GM10248 (cell line): ENCODE measurements at regions of chr7 and their contacts with region 1.

Region 1: DNA sequence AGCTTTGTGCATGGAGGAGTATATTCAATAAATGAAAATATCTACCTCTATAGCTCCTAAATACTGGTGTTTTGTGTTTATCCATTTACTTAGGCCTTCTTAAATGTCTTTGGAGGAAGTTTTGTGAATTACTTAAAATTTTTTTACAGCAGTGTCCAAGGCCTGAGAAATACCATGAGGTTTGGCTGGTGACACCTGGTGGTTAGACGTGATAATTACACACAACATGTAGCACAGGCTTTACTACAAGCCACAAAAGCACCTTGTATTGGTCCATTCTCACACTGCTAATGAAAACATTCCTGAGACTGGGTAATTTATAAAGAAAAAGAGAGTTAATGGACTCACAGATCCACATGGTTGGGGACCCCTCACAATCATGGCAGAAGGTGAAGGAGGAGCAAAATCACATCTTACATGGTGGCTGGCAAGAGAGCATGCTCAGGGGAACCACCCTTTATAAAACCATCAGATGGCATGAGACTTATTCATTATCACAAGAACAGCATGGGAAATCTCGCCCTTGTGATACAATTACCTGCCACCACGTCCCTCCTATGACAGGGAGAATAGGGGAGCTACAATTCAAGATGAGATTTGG is 20.6 kb downstream of the HYAL4 start:
- DNase-seq: peak; percentile 24
- CTCF ChIP-seq: peak; percentile 51

Region 2: GRCh38 chr7:123682690-123683089 is 182.9 kb before region 1 on chr7:
- CTCF ChIA-PET with region 1: interaction called, 15 read pairs
- POLR2A ChIA-PET with region 1: no interaction called
- DNase-seq: no peak
- CTCF ChIP-seq: peak; percentile 41

Region 3: GRCh38 chr7:123748734-123749536 is 116.7 kb before region 1 on chr7 and contains the start of gene WASL:
- CTCF ChIA-PET with region 1: interaction called, 11 read pairs
- POLR2A ChIA-PET with region 1: no interaction called
- DNase-seq: peak; percentile 90
- CTCF ChIP-seq: no peak

Region 4: GRCh38 chr7:123792547-123792946 is 73.1 kb before region 1 on chr7:
- CTCF ChIA-PET with region 1: interaction called, 109 read pairs
- POLR2A ChIA-PET with region 1: no interaction called
- DNase-seq: no peak
- CTCF ChIP-seq: no peak

Region 5: DNA sequence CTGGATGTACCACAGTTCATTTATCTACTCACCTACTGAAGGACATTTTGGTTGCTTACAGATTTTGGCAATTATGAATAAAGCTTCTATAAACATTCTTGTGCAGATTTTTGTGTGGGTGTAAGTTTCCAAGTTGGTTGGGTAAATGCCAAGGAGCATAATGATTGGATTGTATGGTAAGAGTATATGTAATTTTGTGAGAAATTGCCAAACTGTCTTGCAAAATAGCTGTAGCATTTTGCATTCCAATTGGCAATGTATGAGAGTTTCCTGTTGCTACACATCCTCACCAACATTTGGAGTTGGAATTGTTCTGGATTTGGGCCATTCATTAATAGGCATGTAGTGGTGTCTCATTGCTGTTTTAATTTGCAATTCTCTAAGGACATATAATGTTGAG is 54.6 kb before region 1 on chr7:
- CTCF ChIA-PET with region 1: interaction called, 11 read pairs
- POLR2A ChIA-PET with region 1: no interaction called
- DNase-seq: no peak
- CTCF ChIP-seq: no peak

Region 6: DNA sequence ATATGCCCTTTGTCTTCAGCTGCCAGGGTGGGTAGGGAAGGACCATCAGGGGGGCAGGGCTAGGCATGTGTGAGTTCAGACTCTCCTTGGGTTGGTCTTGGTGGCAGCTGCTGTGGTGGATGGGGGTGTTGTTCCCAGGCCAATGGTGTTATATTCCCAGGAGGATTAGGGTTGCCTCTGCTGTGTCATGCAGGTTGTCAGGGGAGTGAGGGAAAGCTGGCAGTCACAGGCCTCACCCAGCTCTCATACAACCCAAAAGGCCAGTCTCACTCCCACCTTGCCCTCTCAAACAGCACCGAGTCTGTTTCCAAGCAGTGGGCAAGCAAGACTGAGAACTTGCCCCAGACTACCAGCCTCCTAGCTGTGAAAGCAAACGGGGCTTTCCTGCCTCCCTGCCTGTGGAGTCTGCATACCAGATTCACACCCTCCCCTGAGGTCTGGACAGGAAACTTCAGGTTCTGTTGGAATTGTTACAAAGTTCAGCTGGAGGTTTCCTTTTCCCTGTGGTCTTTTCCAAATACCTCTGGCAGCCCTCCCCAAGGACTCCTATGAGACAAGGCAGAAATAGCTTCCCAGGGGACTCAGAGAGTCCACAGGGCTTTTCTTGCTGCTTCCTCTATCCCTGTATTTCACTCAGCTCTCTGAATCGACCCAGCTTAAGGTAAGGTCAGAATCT is 19.3 kb before region 1 on chr7:
- CTCF ChIA-PET with region 1: interaction called, 23 read pairs
- POLR2A ChIA-PET with region 1: no interaction called
- DNase-seq: no peak
- CTCF ChIP-seq: no peak

Region 7: DNA sequence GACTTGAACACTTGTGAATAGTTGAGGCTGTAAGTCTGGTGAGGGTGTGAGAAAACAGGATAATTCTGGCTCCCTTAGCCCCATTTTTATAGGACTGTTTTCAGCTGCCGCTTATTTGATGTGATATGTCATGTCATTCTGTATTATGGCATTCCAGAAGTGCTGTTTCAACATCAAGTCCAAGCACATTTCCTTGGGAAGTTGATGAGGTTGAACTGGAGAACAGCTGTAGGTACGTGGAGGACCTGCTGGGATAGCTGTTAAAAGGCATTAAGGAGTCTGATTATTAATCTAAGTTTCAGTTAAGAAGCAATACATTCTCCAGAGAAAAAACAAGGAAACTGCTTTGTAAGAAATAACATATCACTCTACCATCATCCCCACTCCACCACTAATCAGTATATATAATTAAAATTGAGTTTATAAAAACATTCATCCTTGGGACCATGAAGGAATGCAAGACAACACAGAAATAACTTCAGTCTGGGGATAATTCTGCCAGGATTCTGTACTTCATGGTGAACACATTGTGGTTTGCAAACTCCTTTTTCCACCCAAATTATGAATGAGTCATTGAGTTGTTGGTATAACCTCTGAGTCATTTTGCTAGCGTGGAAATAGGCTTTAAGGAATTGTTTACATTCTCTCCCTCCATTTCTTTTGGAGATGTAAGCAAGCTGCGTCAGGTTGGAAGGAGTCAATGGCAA is 207.1 kb after region 1 on chr7:
- CTCF ChIA-PET with region 1: no interaction called
- POLR2A ChIA-PET with region 1: no interaction called
- DNase-seq: no peak
- CTCF ChIP-seq: no peak